ENCODE measurements at regions of chrX and their contacts with region 1.

Region 1: GRCh38 chrX:104621781-104622180 is 55.8 kb downstream of the IL1RAPL2 start:
- DNase-seq: no peak
- H3K4me3 ChIP-seq: no peak overlapping the region
- H3K27ac ChIP-seq: no peak overlapping the region
- H3K4me1 ChIP-seq: no peaks in the 10 kb centered on the region
- H3K27me3 ChIP-seq: peaks cover 0 to 22% of the 10 kb centered on the region in 2 donors
- CTCF ChIP-seq: no peak
- POLR2A ChIP-seq: no peak

Region 2: GRCh38 chrX:103475381-103475780 is 1146.4 kb before region 1 on chrX:
- intact Hi-C with region 1: no loop called
- DNase-seq: no peak
- H3K4me3 ChIP-seq: no peak overlapping the region
- H3K27ac ChIP-seq: no peak overlapping the region
- H3K4me1 ChIP-seq: no peaks in the 10 kb centered on the region
- H3K27me3 ChIP-seq: peaks cover 0 to 56% of the 10 kb centered on the region in 2 donors
- CTCF ChIP-seq: no peak
- POLR2A ChIP-seq: no peak

Region 3: DNA sequence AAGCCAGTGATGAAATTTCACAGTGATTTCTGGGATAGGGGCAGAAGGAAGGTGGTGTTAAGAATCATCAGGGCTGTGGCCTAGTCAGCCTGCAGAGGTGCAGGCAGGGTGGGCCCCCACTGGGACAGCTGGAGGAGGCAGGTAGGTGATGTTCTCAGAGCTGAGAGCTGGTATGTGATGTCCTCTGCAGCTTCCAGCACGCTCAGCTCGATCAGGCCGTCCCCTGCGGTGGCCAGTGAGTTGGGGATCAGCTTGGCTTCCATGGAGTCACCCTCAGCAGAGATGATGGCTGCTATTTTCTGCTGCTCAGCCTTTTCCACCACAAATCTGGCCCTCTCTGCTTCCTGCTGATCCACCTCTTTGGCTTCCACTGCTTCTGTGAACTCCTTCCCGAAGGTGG is 25.3 kb after region 1 on chrX:
- intact Hi-C with region 1: no loop called
- DNase-seq: no peak
- H3K4me3 ChIP-seq: no peak overlapping the region
- H3K27ac ChIP-seq: no peak overlapping the region
- H3K4me1 ChIP-seq: no peaks in the 10 kb centered on the region
- H3K27me3 ChIP-seq: peaks cover 0 to 3% of the 10 kb centered on the region in 2 donors
- CTCF ChIP-seq: no peak
- POLR2A ChIP-seq: no peak

Region 4: DNA sequence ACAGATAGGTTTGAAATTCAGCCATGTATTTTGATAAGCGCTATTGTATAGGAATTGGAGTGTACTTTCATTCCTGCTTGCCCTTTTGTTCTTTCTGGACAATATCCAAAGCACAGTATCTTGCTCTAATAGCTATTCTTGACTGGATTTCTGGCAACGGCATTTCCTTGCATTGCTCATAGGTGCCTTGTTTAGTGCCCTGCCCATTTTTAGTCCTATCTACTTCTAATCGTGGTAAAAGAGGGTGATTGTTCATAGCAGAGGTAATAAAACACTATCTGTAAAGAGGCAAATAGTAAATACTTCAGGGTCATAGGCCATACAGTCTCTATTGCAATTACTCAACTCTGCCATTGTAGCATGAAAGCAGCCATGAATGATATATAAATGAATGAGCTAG is 100.1 kb after region 1 on chrX:
- intact Hi-C with region 1: no loop called
- DNase-seq: no peak
- H3K4me3 ChIP-seq: no peak overlapping the region
- H3K27ac ChIP-seq: no peak overlapping the region
- H3K4me1 ChIP-seq: no peaks in the 10 kb centered on the region
- H3K27me3 ChIP-seq: peaks cover 0 to 10% of the 10 kb centered on the region in 2 donors
- CTCF ChIP-seq: no peak
- POLR2A ChIP-seq: no peak

Region 5: DNA sequence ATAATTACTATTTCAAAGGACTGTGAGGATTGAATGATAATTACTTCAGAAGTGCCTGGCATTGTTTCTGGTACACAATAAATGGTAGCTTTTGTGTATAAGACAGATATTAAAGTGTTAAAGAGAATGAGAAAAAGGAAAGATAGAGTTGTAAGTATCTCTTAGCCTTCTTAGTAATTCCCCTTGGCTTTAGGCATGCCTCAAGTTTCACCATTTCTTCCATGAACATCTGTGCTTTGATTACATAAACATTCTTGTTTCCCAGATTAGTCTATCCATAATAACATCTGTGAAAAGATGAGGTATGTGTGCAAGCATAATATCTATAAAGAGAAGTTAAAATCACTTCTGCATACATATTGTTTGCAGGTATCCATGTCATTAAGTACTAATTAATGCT is 829.6 kb after region 1 on chrX:
- intact Hi-C with region 1: loop called (anchors 10 kb)
- DNase-seq: no peak
- H3K4me3 ChIP-seq: no peak overlapping the region
- H3K27ac ChIP-seq: no peak overlapping the region
- H3K4me1 ChIP-seq: no peaks in the 10 kb centered on the region
- H3K27me3 ChIP-seq: peaks cover 0 to 24% of the 10 kb centered on the region in 2 donors
- CTCF ChIP-seq: no peak
- POLR2A ChIP-seq: no peak

Region 6: DNA sequence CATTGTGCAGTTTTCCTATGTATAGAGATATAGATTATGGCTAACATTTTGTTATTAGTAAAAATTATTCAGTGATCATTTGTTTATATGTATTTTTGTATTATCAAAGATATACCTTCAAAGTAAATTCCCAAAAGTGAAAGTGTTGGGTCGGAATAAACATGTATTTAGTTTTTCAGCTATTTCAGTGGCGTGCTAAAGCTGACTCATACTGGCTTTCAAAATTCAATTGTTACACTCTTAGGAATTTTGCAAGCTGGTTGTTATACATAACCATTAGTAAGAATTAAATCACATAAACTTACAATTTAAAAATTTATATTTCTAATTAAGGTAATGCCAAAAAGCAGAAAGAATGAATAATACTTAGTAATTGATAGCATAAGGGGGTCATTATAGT is 912.2 kb after region 1 on chrX:
- intact Hi-C with region 1: no loop called
- DNase-seq: no peak
- H3K4me3 ChIP-seq: no peak overlapping the region
- H3K27ac ChIP-seq: no peak overlapping the region
- H3K4me1 ChIP-seq: no peaks in the 10 kb centered on the region
- H3K27me3 ChIP-seq: peaks cover 0 to 33% of the 10 kb centered on the region in 2 donors
- CTCF ChIP-seq: no peak
- POLR2A ChIP-seq: no peak

Measured in breast epithelium (tissue), 4 donors.